CD4-positive, alpha-beta memory T cell (primary cell): ENCODE measurements at regions of chr12 and their contacts with region 1.

Region 1: DNA sequence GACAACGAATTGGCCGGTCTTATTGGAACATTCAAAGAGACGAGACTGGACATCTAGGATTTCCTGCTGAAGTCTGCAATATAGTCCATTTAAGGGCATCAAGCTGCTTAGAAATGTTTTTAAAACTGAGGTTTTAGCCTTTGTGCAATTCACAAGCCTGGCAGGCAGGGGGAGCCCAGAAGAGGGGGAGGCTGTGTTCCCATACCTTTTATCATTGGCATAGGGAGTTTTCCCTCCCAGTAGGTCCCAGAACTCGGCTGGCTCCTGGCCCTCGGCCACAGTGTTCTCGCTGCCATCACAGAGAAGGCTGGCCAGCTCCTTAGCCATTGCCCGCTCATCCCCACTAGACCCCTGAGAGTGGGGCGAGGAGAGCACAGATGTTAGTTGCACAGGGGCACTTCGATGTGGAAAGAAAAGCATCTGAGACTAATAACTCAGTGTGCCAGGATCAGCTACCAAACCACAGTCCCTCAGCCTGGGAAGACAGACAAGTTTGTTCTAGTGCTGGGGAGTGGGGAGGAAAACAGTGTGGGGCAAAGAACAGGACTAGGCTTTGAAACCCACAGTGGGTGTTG is 15.1 kb downstream of the AVIL start:
- DNase-seq: peak in 4 of 5 donors; percentile 13 to 31 (median 26)
- H3K4me3 ChIP-seq: no peak overlapping the region
- H3K4me3 Mint-ChIP-seq: no peak overlapping the region
- H3K27ac ChIP-seq: no peak overlapping the region
- H3K27ac Mint-ChIP-seq: peak overlapping the region in 4 of 7 donors; percentile 22 to 64 (median 33)
- H3K4me1 ChIP-seq: no peaks in the 10 kb centered on the region
- H3K4me1 Mint-ChIP-seq: no peaks in the 10 kb centered on the region
- H3K27me3 ChIP-seq: no peaks in the 10 kb centered on the region
- H3K27me3 Mint-ChIP-seq: no peaks in the 10 kb centered on the region

Region 2: GRCh38 chr12:57744777-57745484 is 58.5 kb before region 1 on chr12 and contains the start of gene TSPAN31:
- CTCF ChIA-PET with region 1: no interaction called
- POLR2A ChIA-PET with region 1: no interaction called
- intact Hi-C with region 1: no loop called
- DNase-seq: peak; percentile 91 to 98 (median 95)
- H3K4me3 ChIP-seq: peak within 1 kb of the TSS; percentile 72 to 83
- H3K4me3 Mint-ChIP-seq: peak within 1 kb of the TSS; percentile 86 to 97 (median 92)
- H3K27ac ChIP-seq: peak within 1 kb of the TSS; percentile 93
- H3K27ac Mint-ChIP-seq: peak within 1 kb of the TSS; percentile 88 to 99 (median 97)
- H3K4me1 ChIP-seq: peaks cover 49% of the 10 kb centered on the region
- H3K4me1 Mint-ChIP-seq: peaks cover 30 to 58% (median 43%) of the 10 kb centered on the region in 4 donors
- H3K27me3 ChIP-seq: no peaks in the 10 kb centered on the region
- H3K27me3 Mint-ChIP-seq: no peaks in the 10 kb centered on the region
- total RNA-seq, gene TSPAN31: 27.5 to 30.6 TPM

Region 3: DNA sequence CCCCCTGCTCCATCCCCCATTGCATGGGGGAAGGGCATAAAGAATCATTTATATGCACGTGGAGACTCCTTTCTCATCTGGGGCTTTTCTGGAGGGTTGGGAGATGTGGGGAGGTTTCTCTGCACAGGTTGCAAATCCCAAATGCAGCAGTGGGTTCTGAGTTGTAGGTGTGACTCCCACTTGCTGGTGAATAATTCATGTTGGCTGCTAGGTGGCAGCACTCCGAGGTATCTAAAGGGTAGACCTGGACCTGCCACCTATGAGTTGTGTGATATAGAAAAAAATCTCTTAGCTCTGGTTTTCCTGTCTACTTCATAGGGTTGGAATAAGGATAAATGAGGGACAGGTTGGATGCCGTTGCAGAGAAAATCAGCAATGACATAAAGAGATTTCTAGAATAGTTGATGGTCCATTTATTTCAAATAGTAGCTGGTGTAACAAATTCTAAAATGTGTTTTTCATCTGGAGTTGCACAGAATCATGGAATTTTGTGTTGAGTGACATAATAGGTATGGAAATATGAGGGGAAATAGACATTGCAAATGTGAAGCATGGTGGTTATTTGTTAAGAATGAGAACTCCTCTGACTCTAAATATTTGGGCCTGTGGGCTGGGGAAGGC is 43.9 kb before region 1 on chr12:
- CTCF ChIA-PET with region 1: interaction called, 12 read pairs
- POLR2A ChIA-PET with region 1: no interaction called
- intact Hi-C with region 1: no loop called
- DNase-seq: peak in 4 of 5 donors; percentile 47 to 65 (median 56)
- H3K4me3 ChIP-seq: no peak overlapping the region
- H3K4me3 Mint-ChIP-seq: peak overlapping the region in 3 of 8 donors; percentile 39 to 70 (median 64)
- H3K27ac ChIP-seq: no peak overlapping the region
- H3K27ac Mint-ChIP-seq: peak overlapping the region in 5 of 7 donors; percentile 32 to 82 (median 79)
- H3K4me1 ChIP-seq: peaks cover 33% of the 10 kb centered on the region
- H3K4me1 Mint-ChIP-seq: peaks cover 25 to 54% (median 35%) of the 10 kb centered on the region in 4 donors
- H3K27me3 ChIP-seq: no peaks in the 10 kb centered on the region
- H3K27me3 Mint-ChIP-seq: peaks cover 3 to 6% of the 10 kb centered on the region in 2 donors

Region 4: DNA sequence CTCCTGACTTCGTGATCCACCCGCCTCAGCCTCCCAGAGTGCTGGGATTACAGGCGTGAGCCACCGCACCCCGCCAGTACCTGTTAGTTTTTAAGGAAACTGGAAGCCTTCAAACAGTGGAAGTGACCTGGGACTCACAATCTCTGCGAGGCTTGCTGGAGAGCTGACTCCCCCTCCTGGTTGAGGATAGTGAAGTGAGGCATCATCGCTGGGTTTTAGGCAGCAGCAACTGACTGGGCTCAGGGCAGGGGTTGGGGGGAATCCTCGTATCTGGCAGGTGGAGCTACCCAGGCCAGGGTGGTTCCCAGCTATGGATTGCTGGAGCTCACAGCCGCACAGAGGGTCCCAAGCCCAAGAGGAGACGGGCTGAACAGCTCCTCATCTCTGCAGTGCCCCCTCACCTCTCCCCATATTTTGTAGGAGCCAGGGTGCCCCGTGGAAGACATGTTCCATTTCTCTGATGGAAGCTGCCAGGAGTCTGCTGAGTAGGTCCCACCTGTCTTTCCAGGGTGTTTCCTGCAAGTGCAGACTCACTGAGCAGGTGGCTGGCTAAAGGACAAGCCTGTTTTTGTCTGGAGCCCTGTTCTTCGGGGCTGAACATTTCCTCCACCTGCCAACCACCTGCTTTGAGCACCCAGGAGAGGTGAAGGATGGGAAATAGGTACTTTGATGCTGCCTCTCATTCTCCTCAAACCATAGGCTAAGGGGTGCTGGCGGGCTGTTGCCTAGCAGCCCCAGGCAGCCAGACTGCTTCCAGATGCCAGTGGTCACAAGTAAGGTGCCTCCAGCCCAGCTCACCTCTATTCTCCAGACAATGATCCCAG is 12.0 kb after region 1 on chr12:
- CTCF ChIA-PET with region 1: interaction called, 18 read pairs
- POLR2A ChIA-PET with region 1: interaction called, 10 read pairs
- intact Hi-C with region 1: no loop called
- DNase-seq: no peak
- H3K4me3 ChIP-seq: no peak overlapping the region
- H3K4me3 Mint-ChIP-seq: no peak overlapping the region
- H3K27ac ChIP-seq: no peak overlapping the region
- H3K27ac Mint-ChIP-seq: peak overlapping the region in 1 of 7 donors; percentile 41
- H3K4me1 ChIP-seq: no peaks in the 10 kb centered on the region
- H3K4me1 Mint-ChIP-seq: peaks cover 0 to 8% (median 5%) of the 10 kb centered on the region in 4 donors
- H3K27me3 ChIP-seq: no peaks in the 10 kb centered on the region
- H3K27me3 Mint-ChIP-seq: no peaks in the 10 kb centered on the region

Region 5: DNA sequence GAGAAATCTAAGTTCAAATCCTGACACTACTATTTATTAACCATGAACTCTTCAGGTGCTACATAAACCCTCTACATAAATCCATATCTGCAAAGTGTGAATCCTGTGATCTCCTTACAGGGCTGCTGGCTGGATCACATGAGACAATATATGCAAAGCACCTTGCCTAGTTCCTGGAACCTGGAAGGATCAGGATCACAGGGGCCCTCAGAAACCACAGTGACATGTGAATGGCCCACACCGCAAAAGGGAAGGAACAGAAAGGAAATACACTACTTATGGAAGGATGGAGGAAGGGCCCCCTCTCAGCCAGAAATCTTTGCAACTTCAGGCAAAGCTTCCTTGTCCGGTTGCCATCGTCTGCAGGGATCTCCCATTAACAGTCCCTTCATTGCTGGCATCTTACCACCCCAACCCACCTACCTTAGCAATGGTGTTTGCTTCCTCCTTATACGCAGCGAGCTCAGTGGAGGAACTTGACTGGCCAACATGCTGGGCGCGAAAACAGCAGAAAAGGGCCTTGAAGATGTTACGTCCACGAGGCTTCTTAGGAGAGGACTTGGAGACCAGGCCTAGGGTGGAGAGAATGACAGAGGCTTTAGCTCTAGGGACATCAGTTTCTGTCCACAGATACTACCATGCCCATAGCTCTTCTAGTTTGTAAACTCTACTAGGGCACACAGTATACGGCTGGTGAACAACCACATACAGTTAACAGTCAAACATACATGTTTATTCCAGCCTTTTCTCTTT is 25.8 kb after region 1 on chr12:
- CTCF ChIA-PET with region 1: interaction called, 15 read pairs
- POLR2A ChIA-PET with region 1: no interaction called
- intact Hi-C with region 1: loop called (anchors 1 kb)
- DNase-seq: no peak
- H3K4me3 ChIP-seq: no peak overlapping the region
- H3K4me3 Mint-ChIP-seq: peak overlapping the region in 1 of 8 donors; percentile 57
- H3K27ac ChIP-seq: no peak overlapping the region
- H3K27ac Mint-ChIP-seq: peak overlapping the region in 6 of 7 donors; percentile 17 to 82 (median 71)
- H3K4me1 ChIP-seq: peaks cover 54% of the 10 kb centered on the region
- H3K4me1 Mint-ChIP-seq: peaks cover 32 to 60% (median 44%) of the 10 kb centered on the region in 4 donors
- H3K27me3 ChIP-seq: no peaks in the 10 kb centered on the region
- H3K27me3 Mint-ChIP-seq: no peaks in the 10 kb centered on the region

Region 6: GRCh38 chr12:57836442-57837375 is 33.3 kb after region 1 on chr12:
- CTCF ChIA-PET with region 1: interaction called, 7 read pairs
- POLR2A ChIA-PET with region 1: no interaction called
- intact Hi-C with region 1: loop called (anchors 1 kb)
- DNase-seq: peak in 4 of 5 donors; percentile 42 to 69 (median 52)
- H3K4me3 ChIP-seq: peak overlapping the region; percentile 6 to 23
- H3K4me3 Mint-ChIP-seq: peak overlapping the region; percentile 41 to 78 (median 67)
- H3K27ac ChIP-seq: peak overlapping the region; percentile 62
- H3K27ac Mint-ChIP-seq: peak overlapping the region; percentile 83 to 95 (median 93)
- H3K4me1 ChIP-seq: peaks cover 99% of the 10 kb centered on the region
- H3K4me1 Mint-ChIP-seq: peaks cover 78 to 99% (median 88%) of the 10 kb centered on the region in 4 donors
- H3K27me3 ChIP-seq: no peaks in the 10 kb centered on the region
- H3K27me3 Mint-ChIP-seq: no peaks in the 10 kb centered on the region

Region 7: DNA sequence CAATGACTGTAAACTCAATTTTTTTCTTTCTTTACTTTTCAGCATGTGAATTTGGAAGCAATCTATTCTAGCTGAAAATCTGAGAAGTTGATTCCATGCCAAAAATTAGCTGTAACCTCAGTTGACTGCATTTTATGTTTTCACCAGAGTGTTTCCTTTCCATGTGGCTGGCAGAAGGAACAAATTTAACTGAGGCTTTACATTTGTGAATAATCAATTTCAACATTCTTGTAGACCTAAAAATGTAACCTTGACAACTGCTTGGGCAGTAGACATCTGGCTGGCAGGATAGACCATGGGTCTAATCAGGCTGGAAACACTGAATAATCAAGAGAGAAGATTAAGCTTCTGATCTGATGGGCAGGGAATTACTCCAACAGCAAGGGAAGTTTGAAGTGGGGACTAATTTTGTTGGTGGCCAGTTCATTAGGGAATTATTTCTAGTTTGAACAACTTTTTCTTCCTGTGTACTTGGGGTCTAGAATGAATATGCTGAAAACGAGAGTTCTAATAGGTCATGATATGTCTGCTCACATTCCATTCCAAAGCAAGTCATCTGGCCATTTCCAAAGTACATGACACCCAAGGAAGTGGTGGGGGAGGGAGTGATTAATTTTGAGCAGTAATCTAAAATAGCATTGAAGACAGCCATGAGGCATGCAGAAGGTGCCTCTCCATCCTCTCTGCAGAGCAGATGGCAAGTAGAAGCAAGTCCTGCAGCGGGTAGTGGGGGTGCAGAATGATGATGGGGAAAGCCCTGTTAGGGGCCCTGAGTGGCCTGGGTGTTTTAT is 206.2 kb after region 1 on chr12:
- CTCF ChIA-PET with region 1: no interaction called
- POLR2A ChIA-PET with region 1: no interaction called
- intact Hi-C with region 1: no loop called
- DNase-seq: no peak
- H3K4me3 ChIP-seq: no peak overlapping the region
- H3K4me3 Mint-ChIP-seq: no peak overlapping the region
- H3K27ac ChIP-seq: no peak overlapping the region
- H3K27ac Mint-ChIP-seq: no peak overlapping the region
- H3K4me1 ChIP-seq: no peaks in the 10 kb centered on the region
- H3K4me1 Mint-ChIP-seq: no peaks in the 10 kb centered on the region
- H3K27me3 ChIP-seq: no peaks in the 10 kb centered on the region
- H3K27me3 Mint-ChIP-seq: peaks cover 7 to 8% of the 10 kb centered on the region in 2 donors